Dorsolateral prefrontal cortex (tissue), 120 donors: ENCODE measurements at regions of chr9 and their contacts with region 1.

Region 1: DNA sequence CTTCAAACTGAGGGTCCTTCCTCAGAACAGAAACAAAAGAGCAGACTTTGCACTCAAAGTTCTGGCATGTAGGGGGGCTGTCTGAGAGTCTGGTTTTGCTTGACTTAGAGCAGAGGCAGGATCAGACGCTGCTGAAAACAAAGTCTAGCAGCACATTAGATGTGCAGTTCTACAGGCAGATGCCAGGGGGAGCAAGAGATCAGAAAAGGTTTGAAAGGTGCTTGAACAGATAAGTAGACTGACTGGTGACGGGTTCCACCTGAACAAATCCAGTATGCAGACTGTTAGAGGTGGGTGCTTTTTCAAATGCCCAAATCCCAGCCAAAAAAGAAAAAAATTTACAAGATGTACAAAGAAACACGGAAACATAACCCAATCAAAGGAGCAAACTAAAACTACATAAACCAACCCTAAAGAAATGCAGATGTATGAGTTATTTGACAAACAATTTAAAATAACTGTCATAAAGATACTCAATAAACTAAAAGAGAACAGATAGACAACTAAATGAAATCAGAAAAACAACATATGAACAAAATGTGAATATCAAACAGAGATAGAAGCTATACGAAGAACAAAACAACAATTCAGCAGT is 194.7 kb upstream of the FREM1 start:
- DNase-seq: peak in 1 of 10 donors; percentile 26
- H3K4me3 ChIP-seq: no peak overlapping the region
- H3K27ac ChIP-seq: no peak overlapping the region
- H3K27me3 ChIP-seq: no peaks in the 10 kb centered on the region
- CTCF ChIP-seq: peak in 55 of 56 donors; percentile 28 to 75 (median 60)

Region 2: GRCh38 chr9:15135164-15135792 is 30.4 kb after region 1 on chr9:
- intact Hi-C with region 1: loop called in 1 of 2 experiments (anchors 2 kb)
- DNase-seq: peak in 8 of 10 donors; percentile 37 to 67 (median 51)
- H3K4me3 ChIP-seq: peak overlapping the region in 51 of 59 donors; percentile 5 to 58 (median 36)
- H3K27ac ChIP-seq: peak overlapping the region in 5 of 59 donors; percentile 16 to 61 (median 35)
- H3K27me3 ChIP-seq: no peaks in the 10 kb centered on the region
- CTCF ChIP-seq: peak; percentile 63 to 94 (median 89)